Endothelial cell of umbilical vein (primary cell): ENCODE measurements at regions of chr5 and their contacts with region 1.

Region 1: DNA sequence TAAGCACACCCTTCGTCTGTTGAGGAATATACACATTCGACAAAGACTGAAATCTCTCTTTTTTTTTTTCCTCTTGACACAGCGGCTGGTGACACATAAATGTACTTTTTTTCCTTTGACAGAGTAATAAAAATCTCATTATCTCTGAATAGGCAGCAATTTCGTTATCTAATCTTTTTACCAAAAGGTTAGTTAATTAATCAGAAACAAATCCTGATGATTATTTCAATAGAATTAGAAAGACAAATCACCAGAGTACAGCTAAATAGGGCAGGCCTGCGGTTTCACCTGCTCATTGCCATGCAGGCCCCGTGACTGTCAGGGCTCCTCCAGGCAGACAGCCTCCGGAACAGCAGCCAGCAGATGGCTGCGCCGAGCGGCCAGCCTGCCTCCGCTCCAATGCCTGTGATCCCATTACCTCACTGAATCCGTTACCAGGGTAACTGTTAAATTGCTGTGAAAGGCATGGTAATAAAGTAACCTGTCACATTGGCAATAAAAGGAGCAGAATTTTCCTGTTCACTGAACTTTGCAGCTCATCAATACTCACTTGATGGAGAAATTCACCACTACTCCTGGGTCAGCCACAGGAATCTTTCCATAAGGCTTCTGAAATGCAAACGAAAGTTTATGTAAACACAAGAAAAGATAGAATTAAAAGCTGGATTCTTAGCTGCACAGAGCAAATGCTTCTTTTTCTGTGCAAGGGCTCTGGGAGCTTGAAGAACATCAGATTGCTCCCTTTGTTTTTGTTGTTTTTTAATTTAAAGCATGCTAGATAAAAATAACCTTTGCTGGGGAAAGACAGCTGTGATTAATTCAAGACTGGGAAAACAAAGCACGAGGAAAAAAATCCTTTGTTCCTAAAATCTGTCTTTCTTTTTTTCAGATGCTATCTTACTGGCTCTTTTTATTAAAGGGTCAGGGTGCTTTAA is 666.4 kb upstream of the ZNF608 start:
- DNase-seq: peak; percentile 93
- H3K4me3 ChIP-seq: no peak overlapping the region
- H3K27ac ChIP-seq: peak overlapping the region; percentile 99
- H3K4me1 ChIP-seq: peaks cover 54% of the 10 kb centered on the region
- H3K27me3 ChIP-seq: no peaks in the 10 kb centered on the region
- CTCF ChIP-seq: peak; percentile 58 to 66
- POLR2A ChIP-seq: no peak

Region 2: DNA sequence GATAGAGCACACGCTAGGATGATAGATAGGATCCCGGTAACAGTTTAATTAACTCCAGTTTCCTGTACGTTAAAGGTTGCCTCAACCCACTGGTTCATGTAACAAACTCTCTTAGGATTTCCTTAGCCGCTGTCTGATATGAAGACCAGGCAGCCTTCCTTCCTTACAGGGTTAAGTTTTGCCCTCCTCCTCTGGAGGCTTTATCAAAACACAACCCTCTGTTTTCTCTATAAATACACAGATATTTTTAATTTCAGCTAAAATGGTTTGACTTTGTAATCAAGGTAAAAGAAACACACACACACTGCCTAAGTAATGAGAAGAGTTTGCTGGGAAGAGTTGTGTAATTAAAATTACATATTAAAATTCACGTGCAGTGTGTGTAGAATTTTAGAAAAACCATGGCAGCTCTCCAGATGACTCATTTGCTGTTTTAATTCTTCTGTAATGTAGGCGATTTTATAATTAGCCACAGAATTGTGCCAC is 1531.0 kb before region 1 on chr5:
- CTCF ChIA-PET with region 1: no interaction called
- POLR2A ChIA-PET with region 1: no interaction called
- dilution Hi-C with region 1: no loop called
- intact Hi-C with region 1: loop called (anchors 5 kb)
- DNase-seq: peak; percentile 90
- H3K4me3 ChIP-seq: peak overlapping the region in 1 of 3 experiments; percentile 58
- H3K27ac ChIP-seq: peak overlapping the region; percentile 48
- H3K4me1 ChIP-seq: peaks cover 27% of the 10 kb centered on the region
- H3K27me3 ChIP-seq: peaks cover 3 to 7% of the 10 kb centered on the region in 2 experiments
- CTCF ChIP-seq: no peak
- POLR2A ChIP-seq: no peak

Region 3: DNA sequence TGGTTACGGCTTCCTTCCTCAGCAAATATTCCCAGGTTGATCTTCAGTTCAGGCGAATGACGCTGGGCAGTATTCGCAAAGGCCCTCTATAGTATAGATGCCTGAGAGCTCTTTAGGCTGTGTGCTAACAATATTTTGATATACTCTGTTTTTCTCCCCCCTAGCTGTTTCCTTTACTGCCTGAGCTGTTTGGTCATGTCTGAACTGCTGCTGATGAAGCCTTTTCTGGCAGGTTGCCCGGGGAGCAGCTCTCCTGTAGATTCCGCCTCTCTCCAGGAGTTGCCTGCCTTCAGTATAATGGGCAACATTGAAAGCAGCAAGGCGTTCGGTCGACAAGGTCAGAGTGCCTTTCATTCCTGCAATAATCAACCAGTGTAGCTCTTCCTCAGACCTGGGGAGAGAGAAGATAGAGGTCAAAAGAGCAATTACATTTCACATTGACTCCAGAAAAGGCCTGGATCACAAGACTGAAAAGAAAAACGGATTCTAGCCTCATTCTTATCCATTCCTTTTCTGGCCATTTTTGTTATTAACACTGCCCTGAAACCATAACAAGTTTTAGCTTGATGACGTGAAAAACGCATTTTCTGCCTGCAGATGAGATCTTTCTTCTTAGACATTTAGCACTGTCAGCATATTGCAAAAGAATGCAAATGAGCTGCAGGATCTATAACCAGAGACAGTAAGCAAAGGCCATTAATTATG is 606.3 kb before region 1 on chr5:
- CTCF ChIA-PET with region 1: no interaction called
- POLR2A ChIA-PET with region 1: no interaction called
- dilution Hi-C with region 1: no loop called
- intact Hi-C with region 1: loop called (anchors 1 kb)
- DNase-seq: peak; percentile 94
- H3K4me3 ChIP-seq: no peak overlapping the region
- H3K27ac ChIP-seq: no peak overlapping the region
- H3K4me1 ChIP-seq: peaks cover 5% of the 10 kb centered on the region
- H3K27me3 ChIP-seq: no peaks in the 10 kb centered on the region
- CTCF ChIP-seq: no peak
- POLR2A ChIP-seq: no peak

Region 4: DNA sequence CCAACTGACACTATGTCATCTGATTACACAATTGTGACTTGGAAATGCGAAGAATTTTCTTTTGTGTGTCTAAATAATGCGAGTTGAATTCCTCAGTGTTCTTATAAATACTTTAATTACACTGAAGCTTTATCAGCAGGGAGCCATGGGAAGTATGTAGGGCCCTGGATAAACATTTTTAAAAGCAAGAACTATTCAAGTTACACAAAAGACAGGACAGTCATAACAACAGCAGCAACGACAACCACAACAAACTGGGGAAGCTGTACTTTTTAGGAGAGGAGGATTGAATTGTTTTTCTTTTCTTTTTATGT is 416.1 kb before region 1 on chr5:
- CTCF ChIA-PET with region 1: interaction called, 3 read pairs
- POLR2A ChIA-PET with region 1: no interaction called
- dilution Hi-C with region 1: no loop called
- intact Hi-C with region 1: loop called (anchors 1 kb)
- DNase-seq: peak; percentile 68
- H3K4me3 ChIP-seq: no peak overlapping the region
- H3K27ac ChIP-seq: no peak overlapping the region
- H3K4me1 ChIP-seq: peaks cover 8% of the 10 kb centered on the region
- H3K27me3 ChIP-seq: no peaks in the 10 kb centered on the region
- CTCF ChIP-seq: no peak
- POLR2A ChIP-seq: no peak

Region 5: DNA sequence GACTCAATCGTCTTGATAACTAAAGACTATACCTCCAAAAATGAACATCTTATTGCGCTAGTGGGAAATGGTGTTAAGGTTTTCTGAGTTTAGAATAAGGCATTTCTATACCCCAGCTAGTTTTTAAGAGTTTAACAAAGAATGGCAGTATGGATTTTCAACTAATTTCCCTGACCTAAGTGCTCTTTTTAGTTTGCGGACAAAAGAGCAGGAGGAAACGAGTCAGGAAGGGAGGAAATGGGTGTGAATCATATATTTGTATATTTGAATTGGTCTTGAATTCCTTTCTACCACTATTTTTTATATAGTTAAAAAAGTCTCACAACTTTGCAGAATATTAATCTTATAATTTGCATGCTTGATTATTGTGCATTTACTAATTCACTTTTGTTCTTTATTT is 150.0 kb before region 1 on chr5:
- CTCF ChIA-PET with region 1: no interaction called
- POLR2A ChIA-PET with region 1: no interaction called
- dilution Hi-C with region 1: no loop called
- intact Hi-C with region 1: loop called (anchors 1 kb)
- DNase-seq: peak; percentile 83
- H3K4me3 ChIP-seq: no peak overlapping the region
- H3K27ac ChIP-seq: peak overlapping the region; percentile 81
- H3K4me1 ChIP-seq: peaks cover 22% of the 10 kb centered on the region
- H3K27me3 ChIP-seq: no peaks in the 10 kb centered on the region
- CTCF ChIP-seq: no peak
- POLR2A ChIP-seq: no peak

Region 6: DNA sequence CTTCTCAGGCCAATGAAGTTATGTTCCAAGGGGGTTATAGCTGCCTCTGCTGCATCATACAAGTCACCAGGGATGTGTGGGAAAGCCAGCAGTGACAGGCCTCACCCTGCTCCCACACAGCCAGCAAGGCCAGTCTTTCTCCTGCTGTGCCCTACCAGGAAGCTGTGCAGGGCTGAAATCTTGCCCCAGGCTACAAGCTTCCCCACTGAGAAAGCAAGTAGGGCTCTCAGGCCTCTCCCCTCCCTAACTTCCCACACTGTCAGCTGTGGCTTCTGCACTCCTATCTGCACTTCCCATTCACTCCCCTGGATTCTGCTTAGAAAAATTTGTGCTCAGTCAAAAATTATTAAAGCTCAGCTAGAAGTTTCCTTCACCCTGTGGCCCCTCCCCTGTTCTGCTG is 55.2 kb before region 1 on chr5:
- CTCF ChIA-PET with region 1: no interaction called
- POLR2A ChIA-PET with region 1: no interaction called
- dilution Hi-C with region 1: no loop called
- intact Hi-C with region 1: no loop called
- DNase-seq: no peak
- H3K4me3 ChIP-seq: no peak overlapping the region
- H3K27ac ChIP-seq: no peak overlapping the region
- H3K4me1 ChIP-seq: no peaks in the 10 kb centered on the region
- H3K27me3 ChIP-seq: no peaks in the 10 kb centered on the region
- CTCF ChIP-seq: no peak
- POLR2A ChIP-seq: no peak

Region 7: DNA sequence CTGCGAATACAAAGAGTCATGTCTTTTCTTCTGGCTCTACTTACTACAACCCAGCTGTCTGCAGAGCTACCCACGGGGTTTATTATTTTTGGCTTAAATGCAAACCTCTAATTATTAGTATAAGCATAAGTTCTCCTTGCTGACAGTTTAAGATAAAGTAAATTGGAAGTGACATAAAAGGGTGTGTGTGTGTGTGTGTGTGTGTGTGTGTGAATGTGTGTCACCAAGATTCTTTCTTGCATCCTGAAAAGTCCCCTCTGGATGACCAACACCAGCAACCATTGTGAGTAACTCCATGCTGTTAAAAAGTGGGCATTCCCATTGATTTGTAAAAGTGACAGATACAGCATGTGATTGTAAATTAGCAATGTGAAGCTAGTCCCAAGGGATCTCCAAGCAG is 137.4 kb after region 1 on chr5:
- CTCF ChIA-PET with region 1: interaction called, 4 read pairs
- POLR2A ChIA-PET with region 1: interaction called, 4 read pairs
- dilution Hi-C with region 1: no loop called
- intact Hi-C with region 1: loop called (anchors 1 kb)
- DNase-seq: peak; percentile 97
- H3K4me3 ChIP-seq: no peak overlapping the region
- H3K27ac ChIP-seq: peak overlapping the region; percentile 69
- H3K4me1 ChIP-seq: peaks cover 30% of the 10 kb centered on the region
- H3K27me3 ChIP-seq: no peaks in the 10 kb centered on the region
- CTCF ChIP-seq: no peak
- POLR2A ChIP-seq: peak; percentile 66

Region 8: DNA sequence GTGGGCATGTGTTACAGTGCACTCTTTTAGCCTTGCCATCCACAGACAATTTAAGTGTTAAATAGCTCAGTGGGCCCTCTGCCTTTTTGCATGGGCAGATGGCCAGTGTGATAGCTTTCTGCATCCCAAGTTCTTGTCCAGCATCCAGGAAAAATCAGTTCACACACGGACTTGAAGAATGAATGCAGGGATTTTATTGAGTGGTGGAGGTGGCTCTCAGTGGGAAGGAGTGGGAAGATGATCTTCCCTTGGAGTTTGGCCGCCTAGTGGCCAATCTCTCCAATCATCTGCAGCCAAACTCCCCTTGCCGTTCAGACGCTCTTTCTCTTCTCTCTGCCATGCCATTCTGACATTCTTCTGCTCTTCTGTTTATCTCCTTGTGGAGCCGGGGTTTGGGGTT is 687.9 kb after region 1 on chr5:
- CTCF ChIA-PET with region 1: no interaction called
- POLR2A ChIA-PET with region 1: no interaction called
- dilution Hi-C with region 1: no loop called
- intact Hi-C with region 1: loop called (anchors 1 kb)
- DNase-seq: peak; percentile 13
- H3K4me3 ChIP-seq: no peak overlapping the region
- H3K27ac ChIP-seq: no peak overlapping the region
- H3K4me1 ChIP-seq: no peaks in the 10 kb centered on the region
- H3K27me3 ChIP-seq: no peaks in the 10 kb centered on the region
- CTCF ChIP-seq: peak in 1 of 2 donors; percentile 50
- POLR2A ChIP-seq: no peak